ENCODE measurements at regions of chrX and their contacts with region 1.

Region 1: DNA sequence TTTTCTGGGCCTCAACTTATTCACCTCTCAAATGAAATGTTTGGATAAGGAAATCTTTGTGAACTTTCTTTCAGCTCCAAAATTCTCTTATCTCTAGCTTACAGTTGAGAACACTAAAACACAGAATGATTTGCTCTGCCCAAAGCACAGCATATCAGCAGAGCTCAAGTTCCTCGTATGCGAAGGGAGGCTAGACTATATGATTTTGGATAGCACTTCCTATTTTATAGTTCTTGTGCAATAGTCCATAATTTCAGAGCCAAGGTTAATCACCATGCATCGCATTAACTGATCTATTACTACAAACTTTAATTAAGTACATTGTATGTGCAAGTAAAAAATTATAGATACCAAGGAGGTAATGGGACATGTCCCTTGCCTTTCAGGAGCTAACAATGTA is 27.0 kb upstream of the KLHL13 start:
- DNase-seq: no peak
- H3K4me3 ChIP-seq: no peak overlapping the region
- H3K27ac ChIP-seq: no peak overlapping the region
- H3K4me1 ChIP-seq: no peaks in the 10 kb centered on the region
- CTCF ChIP-seq: no peak

Region 2: GRCh38 chrX:117987373-117987772 is 156.2 kb before region 1 on chrX:
- CTCF ChIA-PET with region 1: interaction called, 18 read pairs
- POLR2A ChIA-PET with region 1: no interaction called
- intact Hi-C with region 1: no loop called
- DNase-seq: no peak
- H3K4me3 ChIP-seq: no peak overlapping the region
- H3K27ac ChIP-seq: no peak overlapping the region
- H3K4me1 ChIP-seq: no peaks in the 10 kb centered on the region
- CTCF ChIP-seq: no peak